IMR-90 (cell line): ENCODE measurements at regions of chr10 and their contacts with region 1.

Region 1: DNA sequence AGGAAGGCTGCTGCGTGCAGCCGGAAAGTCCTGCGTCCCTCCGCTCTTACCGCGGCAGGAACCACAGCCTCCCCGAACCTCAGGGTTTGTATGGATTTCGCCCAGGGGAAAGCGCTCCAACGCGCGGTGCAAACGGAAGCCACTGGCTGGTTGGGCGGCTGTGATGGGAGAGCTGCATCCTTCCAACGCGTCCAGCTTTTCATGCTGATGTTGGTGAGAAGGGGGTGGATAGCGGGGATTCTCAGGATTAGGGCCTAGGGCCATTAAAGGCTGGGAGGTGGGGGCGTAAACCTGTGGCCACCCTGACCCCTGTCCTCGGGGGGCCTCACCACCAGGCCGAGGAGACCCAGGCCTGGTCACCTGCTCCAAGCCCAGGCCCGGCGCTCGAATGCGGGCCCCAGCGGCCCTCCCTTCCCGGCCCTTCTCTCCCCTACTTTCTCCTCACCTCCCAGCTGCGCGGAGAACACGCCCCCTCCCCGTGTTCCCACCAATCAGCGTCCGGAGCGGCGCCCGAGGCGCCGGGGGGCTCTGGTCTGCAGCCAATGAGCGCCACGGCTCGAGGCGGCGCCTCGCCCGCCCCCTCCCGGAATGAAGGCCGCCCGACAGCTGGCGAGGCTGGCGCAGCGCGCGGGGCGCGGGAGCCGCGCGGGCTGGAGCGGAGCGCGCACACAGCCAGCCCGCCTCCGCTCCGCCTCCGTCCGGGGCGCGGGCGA is 458 bp upstream of the NANOS1 start:
- DNase-seq: peak; percentile 81
- ATAC-seq: peak; percentile 84
- H3K4me3 ChIP-seq: peak overlapping the region; percentile 60; the same call in 1 of the 2 replicates
- H3K27ac ChIP-seq: no peak overlapping the region
- H3K4me1 ChIP-seq: peaks cover 9% of the 10 kb centered on the region
- H3K27me3 ChIP-seq: peaks cover 2% of the 10 kb centered on the region; the same call in 1 of the 2 replicates
- CTCF ChIP-seq: peak; percentile 26; the same call in 1 of the 2 replicates
- POLR2A ChIP-seq: no peak
- RAD21 ChIP-seq: no peak

Region 2: DNA sequence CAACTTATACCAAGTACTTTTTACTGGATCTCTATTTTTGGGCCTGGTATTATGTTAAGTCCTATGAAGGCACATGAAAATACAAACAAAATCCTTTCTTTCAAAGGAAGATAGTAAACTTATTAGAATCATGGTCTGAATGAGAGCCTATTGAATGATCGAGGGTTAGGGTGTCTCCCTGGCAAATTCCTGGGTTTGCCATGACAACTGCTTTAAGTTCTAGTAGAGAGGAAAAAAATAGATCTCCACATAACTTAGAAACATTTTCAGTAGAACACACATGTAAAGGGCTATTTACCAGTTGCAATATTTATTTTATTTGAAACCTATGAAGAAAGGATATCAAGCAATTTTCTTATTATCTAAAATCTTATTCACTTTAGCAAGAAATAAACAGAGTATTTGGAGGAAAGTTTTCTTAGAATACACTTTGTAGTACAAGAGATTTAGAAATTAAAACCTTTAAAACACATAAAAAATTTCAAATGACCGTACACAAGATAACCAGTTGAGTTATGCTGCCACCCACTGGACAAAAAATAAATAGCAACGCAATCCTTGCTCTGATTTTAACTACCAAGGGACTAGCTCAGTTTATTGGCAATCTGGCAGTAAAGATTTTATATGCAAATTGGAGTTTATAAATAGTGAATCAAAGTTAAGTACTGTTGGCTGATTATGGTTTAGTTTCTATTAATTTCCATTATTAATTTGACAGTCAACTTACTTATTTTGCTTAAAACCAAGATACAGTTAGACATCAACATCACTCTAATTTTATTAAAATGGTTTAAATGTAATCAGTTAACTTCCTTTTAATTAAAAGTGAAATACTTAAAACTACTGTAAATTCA is 308.1 kb before region 1 on chr10:
- CTCF ChIA-PET with region 1: no interaction called
- POLR2A ChIA-PET with region 1: no interaction called
- dilution Hi-C with region 1: no loop called
- in situ Hi-C with region 1: no loop called
- intact Hi-C with region 1: loop called (anchors 10 kb)
- DNase-seq: peak; percentile 62
- ATAC-seq: peak; percentile 82
- H3K4me3 ChIP-seq: no peak overlapping the region
- H3K27ac ChIP-seq: no peak overlapping the region
- H3K4me1 ChIP-seq: peaks cover 9% of the 10 kb centered on the region
- H3K27me3 ChIP-seq: no peaks in the 10 kb centered on the region
- CTCF ChIP-seq: peak; percentile 86
- POLR2A ChIP-seq: no peak
- RAD21 ChIP-seq: peak; percentile 82

Region 3: DNA sequence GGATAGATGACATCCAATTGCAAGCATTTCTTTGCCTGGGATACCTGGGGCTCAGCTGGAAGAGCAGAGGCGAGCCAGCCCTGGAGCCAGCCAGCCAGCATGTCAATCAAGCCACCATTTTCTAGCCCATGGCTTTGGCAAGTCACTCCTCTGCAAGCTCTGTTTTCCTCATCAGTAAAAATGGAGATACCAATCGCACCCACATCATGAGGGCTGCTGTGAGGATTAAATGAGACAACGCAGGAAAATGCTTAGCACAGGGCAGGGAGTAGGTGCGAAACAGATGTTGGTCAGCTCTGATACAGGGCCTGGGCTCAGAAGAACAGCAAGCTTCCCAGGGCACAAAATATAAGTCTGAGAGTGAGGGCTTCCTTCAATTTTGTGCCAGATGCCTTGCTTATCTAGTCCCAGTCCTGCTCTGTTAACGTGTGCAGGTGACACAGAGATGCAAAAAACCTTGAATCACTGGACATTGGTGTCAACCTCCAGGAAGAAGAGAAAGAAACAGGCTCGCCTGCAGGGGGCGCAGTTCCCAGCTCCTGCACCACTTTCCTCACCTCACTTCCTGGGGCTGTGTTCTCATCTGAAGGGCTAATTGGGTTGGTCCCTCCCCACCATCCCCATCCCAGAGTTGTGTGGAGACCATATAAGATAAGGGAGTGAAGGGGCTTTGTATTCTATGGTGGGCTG is 201.4 kb before region 1 on chr10:
- CTCF ChIA-PET with region 1: no interaction called
- POLR2A ChIA-PET with region 1: no interaction called
- dilution Hi-C with region 1: no loop called
- in situ Hi-C with region 1: no loop called
- intact Hi-C with region 1: no loop called
- DNase-seq: no peak
- ATAC-seq: no peak
- H3K4me3 ChIP-seq: no peak overlapping the region
- H3K27ac ChIP-seq: no peak overlapping the region
- H3K4me1 ChIP-seq: no peaks in the 10 kb centered on the region
- H3K27me3 ChIP-seq: peaks cover 3% of the 10 kb centered on the region; the same call in 1 of the 2 replicates
- CTCF ChIP-seq: no peak
- POLR2A ChIP-seq: no peak
- RAD21 ChIP-seq: no peak